ENCODE measurements at regions of chr18 and their contacts with region 1.

Region 1: GRCh38 chr18:74951165-74951760 is 257.7 kb downstream of the PTGR3 start:
- DNase-seq: peak; percentile 42 to 62 (median 49)
- H3K4me3 ChIP-seq: no peak overlapping the region
- H3K4me3 Mint-ChIP-seq: peak overlapping the region in 7 of 8 donors; percentile 50 to 81 (median 68)
- H3K27ac ChIP-seq: no peak overlapping the region
- H3K27ac Mint-ChIP-seq: peak overlapping the region; percentile 86 to 94 (median 90)
- H3K4me1 ChIP-seq: peaks cover 28% of the 10 kb centered on the region
- H3K4me1 Mint-ChIP-seq: peaks cover 23 to 30% (median 26%) of the 10 kb centered on the region in 4 donors
- H3K27me3 ChIP-seq: no peaks in the 10 kb centered on the region
- H3K27me3 Mint-ChIP-seq: no peaks in the 10 kb centered on the region

Region 2: GRCh38 chr18:74994502-74995419 is 43.5 kb after region 1 on chr18:
- CTCF ChIA-PET with region 1: no interaction called
- POLR2A ChIA-PET with region 1: no interaction called
- intact Hi-C with region 1: loop called (anchors 2 kb)
- DNase-seq: peak; percentile 26 to 37 (median 36)
- H3K4me3 ChIP-seq: peak overlapping the region; percentile 2 to 42
- H3K4me3 Mint-ChIP-seq: peak overlapping the region; percentile 76 to 88 (median 82)
- H3K27ac ChIP-seq: peak overlapping the region; percentile 45
- H3K27ac Mint-ChIP-seq: peak overlapping the region; percentile 58 to 93 (median 85)
- H3K4me1 ChIP-seq: peaks cover 41% of the 10 kb centered on the region
- H3K4me1 Mint-ChIP-seq: peaks cover 34 to 59% (median 43%) of the 10 kb centered on the region in 4 donors
- H3K27me3 ChIP-seq: no peaks in the 10 kb centered on the region
- H3K27me3 Mint-ChIP-seq: no peaks in the 10 kb centered on the region

Measured in CD4-positive, alpha-beta memory T cell (primary cell).